HepG2 (cell line): ENCODE measurements at regions of chr19 and their contacts with region 1.

Region 1: DNA sequence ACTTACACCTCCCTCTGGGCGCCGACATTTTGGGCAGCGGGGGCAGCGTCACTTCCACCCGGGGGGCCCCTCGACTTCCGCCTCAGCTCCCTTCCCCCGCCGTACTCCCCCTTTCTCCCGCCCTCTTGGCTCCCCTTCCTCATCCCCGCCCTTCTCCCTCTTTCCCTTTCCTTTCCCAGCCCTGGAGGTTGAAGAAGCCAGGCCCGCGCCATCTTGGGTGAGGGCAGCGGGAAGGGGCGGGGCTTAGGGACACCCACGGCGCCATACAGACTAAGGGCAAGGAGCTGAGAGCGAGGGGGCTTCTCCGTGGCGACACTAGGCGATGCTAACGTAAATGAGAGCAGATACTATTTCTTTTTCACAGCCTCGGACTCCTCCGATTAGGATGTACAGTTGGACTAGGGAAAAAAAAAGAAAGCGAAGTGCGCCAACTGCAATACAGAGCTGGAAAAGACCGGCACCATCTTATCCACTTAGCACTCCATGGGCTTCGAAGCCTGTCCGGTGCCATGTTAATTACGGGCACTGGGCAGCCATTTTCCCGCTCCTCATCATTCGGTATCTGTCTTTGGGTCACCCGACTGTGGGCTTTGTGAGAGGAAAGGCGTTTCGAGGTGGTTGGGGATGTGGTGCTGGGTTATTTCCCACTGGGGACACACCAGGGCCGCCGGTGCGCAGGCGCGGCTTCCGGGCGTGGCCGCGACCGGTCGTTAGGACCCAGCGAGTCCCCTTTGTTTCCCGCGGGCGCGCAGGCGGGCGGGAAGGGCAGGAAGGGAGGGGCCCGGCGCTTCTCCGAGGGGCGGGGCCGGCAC is at the start of gene FIZ1:
- DNase-seq: peak; percentile 98
- ATAC-seq: peak; percentile 86
- H3K4me3 ChIP-seq: peak within 1 kb of the TSS; percentile 73 to 94 (median 90)
- H3K27ac ChIP-seq: peak within 1 kb of the TSS; percentile 98
- H3K4me1 ChIP-seq: peaks cover 39% of the 10 kb centered on the region
- H3K27me3 ChIP-seq: no peaks in the 10 kb centered on the region; a peak in 1 of 5 replicates
- CTCF ChIP-seq: no peak
- EP300 ChIP-seq: no peak
- POLR2A ChIP-seq: peak; percentile 10 to 50; a peak in 2 of 4 replicates
- RAD21 ChIP-seq: peak; percentile 30; the same call in 1 of the 2 replicates
- total RNA-seq, gene FIZ1: 3.4 and 5.9 TPM in 2 replicates

Region 2: GRCh38 chr19:55476100-55476775 is 123.4 kb before region 1 on chr19 and contains the start of gene ZNF628:
- CTCF ChIA-PET with region 1: no interaction called
- POLR2A ChIA-PET with region 1: interaction called, 12 read pairs
- in situ Hi-C with region 1: no loop called
- intact Hi-C with region 1: no loop called
- DNase-seq: peak; percentile 93
- ATAC-seq: peak; percentile 93
- H3K4me3 ChIP-seq: peak within 1 kb of the TSS; percentile 81 to 97 (median 86)
- H3K27ac ChIP-seq: peak within 1 kb of the TSS; percentile 77
- H3K4me1 ChIP-seq: peaks cover 53% of the 10 kb centered on the region
- H3K27me3 ChIP-seq: no peaks in the 10 kb centered on the region; a peak in 1 of 5 replicates
- CTCF ChIP-seq: no peak
- EP300 ChIP-seq: no peak
- POLR2A ChIP-seq: peak in 1 of 2 experiments; percentile 37; a peak in 1 of 4 replicates
- RAD21 ChIP-seq: no peak; the same call in 1 of the 2 replicates
- total RNA-seq, gene ZNF628: 1.00 and 1.2 TPM in 2 replicates

Region 3: DNA sequence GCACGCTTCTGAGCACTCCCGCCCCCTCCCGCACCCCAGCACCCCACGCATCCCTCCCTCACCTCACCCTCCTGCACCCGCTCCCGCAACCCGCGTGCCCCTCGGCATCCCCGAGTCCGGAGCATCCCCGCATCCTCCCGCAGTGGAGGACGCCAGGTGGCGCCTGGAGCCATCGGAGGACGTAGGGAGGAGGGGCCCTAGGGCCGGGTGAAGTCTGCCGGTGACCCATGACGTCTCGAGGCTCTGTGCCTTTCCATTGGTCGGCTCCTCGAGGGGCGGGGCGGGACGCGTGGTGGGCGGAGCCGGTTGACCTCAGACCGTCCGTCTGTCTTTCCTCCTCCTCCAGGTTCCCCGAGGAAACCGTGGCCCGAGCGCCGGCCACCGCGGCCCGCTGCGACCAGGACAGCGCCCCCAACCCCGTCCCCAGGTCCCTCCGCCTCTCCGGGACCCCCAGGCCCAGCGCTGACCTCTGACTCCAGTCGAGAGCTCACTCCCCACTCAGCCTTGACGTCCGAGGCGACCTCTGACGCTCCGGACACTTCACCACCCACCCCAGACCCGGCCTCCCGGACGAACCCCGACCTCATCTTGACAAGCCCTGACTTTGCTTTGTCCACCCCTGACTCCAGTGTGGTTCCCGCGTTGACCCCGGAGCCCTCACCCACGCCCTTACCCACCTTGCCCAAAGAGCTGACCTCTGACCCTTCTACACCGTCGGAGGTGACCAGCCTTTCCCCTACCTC is 82.6 kb before region 1 on chr19:
- CTCF ChIA-PET with region 1: no interaction called
- POLR2A ChIA-PET with region 1: interaction called, 10 read pairs
- in situ Hi-C with region 1: no loop called
- intact Hi-C with region 1: no loop called
- DNase-seq: peak; percentile 78
- ATAC-seq: peak; percentile 97
- H3K4me3 ChIP-seq: peak overlapping the region; percentile 47 to 79 (median 68)
- H3K27ac ChIP-seq: no peak overlapping the region
- H3K4me1 ChIP-seq: peaks cover 4% of the 10 kb centered on the region; the same call in 1 of the 2 replicates
- H3K27me3 ChIP-seq: peaks cover 0 to 22% of the 10 kb centered on the region in 2 experiments; a peak in 4 of 5 replicates
- CTCF ChIP-seq: peak; percentile 100
- EP300 ChIP-seq: no peak
- POLR2A ChIP-seq: peak in 1 of 2 experiments; percentile 46; a peak in 1 of 4 replicates
- RAD21 ChIP-seq: peak; percentile 98

Region 4: DNA sequence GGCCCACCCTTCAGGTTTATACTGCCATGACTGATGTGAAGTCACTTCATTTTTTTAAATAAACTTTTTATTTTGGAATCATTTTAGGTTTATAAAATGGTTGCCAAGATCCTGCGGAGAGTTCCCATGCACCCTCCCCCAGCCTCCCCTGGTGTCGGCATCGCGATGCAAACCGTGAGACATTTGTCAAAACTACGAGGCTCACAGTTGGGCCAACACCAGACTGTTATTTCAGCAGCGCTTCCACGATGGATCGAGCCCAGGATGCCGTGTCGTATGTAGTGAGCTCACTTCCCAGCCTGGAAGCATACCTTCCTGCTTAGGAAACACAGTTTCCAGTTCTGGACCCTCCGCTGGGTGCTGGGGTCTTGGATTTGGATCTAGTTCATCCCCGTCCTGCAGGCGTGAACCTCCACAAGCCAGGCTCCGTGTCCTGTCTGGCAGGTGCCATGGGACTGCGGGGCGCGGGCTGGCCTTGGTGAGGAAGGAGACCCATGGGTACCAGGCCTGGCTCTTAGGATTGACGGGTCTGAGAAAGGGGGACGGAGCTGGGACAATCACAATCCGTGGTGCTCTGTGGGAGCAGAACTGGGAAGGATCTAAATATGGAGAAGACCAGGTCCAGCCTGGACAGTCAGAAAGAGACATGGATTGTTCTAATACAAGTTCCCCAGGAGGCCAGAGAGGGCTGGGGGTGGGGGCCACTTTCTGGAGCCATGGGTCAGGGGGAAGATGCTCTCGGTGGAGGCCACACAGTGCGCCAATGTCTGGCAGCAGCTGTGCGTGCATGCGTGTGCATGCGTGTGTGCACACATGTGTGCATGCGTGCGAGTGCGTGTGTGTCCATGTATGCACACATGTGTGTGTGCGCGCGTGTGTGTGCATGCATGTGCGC is 60.3 kb before region 1 on chr19:
- CTCF ChIA-PET with region 1: no interaction called
- POLR2A ChIA-PET with region 1: no interaction called
- in situ Hi-C with region 1: no loop called
- intact Hi-C with region 1: no loop called
- DNase-seq: no peak
- ATAC-seq: no peak
- H3K4me3 ChIP-seq: no peak overlapping the region
- H3K27ac ChIP-seq: no peak overlapping the region
- H3K4me1 ChIP-seq: peaks cover 35% of the 10 kb centered on the region
- H3K27me3 ChIP-seq: no peaks in the 10 kb centered on the region; a peak in 1 of 5 replicates
- CTCF ChIP-seq: no peak
- EP300 ChIP-seq: no peak
- POLR2A ChIP-seq: no peak
- RAD21 ChIP-seq: no peak

Region 5: DNA sequence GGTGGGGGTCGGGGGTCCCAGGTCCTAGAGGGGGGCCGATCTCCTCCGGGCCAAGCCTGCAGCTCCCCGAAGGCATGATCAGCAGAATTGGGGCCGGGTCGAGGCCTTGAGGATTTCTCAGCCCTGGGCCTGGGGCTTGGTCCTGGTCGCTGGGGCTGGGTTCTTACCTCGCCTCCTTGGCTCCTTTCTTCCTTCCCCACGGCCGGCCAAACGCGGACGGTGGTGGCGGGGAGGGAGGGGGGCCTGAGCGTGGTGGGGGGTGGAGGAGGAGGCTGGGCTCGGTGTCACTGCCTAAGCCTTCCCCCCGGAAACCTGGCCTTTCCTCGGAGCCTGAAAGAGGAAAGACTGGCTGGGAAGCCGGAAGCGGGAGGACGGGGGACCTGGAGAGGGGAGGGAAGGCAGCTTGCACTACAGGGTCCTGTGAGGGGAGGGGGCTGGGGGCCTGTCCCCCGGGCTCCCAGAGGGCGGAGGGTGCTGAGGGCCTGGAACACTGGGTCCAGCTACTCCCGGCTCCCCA is 19.0 kb before region 1 on chr19 and contains the start of gene ZNF579:
- CTCF ChIA-PET with region 1: no interaction called
- POLR2A ChIA-PET with region 1: interaction called, 66 read pairs
- in situ Hi-C with region 1: no loop called
- intact Hi-C with region 1: loop called (anchors 2 kb)
- DNase-seq: peak; percentile 80
- ATAC-seq: peak; percentile 64
- H3K4me3 ChIP-seq: peak within 1 kb of the TSS; percentile 88 to 97 (median 95)
- H3K27ac ChIP-seq: peak within 1 kb of the TSS; percentile 79
- H3K4me1 ChIP-seq: peaks cover 43% of the 10 kb centered on the region
- H3K27me3 ChIP-seq: no peaks in the 10 kb centered on the region
- CTCF ChIP-seq: no peak; the same call in 1 of the 2 replicates
- EP300 ChIP-seq: peak in 1 of 2 experiments; percentile 29; a peak in 1 of 4 replicates
- POLR2A ChIP-seq: peak in 1 of 2 experiments; percentile 23; a peak in 2 of 4 replicates
- RAD21 ChIP-seq: no peak
- total RNA-seq, gene ZNF579: 1.7 and 2.9 TPM in 2 replicates

Region 6: DNA sequence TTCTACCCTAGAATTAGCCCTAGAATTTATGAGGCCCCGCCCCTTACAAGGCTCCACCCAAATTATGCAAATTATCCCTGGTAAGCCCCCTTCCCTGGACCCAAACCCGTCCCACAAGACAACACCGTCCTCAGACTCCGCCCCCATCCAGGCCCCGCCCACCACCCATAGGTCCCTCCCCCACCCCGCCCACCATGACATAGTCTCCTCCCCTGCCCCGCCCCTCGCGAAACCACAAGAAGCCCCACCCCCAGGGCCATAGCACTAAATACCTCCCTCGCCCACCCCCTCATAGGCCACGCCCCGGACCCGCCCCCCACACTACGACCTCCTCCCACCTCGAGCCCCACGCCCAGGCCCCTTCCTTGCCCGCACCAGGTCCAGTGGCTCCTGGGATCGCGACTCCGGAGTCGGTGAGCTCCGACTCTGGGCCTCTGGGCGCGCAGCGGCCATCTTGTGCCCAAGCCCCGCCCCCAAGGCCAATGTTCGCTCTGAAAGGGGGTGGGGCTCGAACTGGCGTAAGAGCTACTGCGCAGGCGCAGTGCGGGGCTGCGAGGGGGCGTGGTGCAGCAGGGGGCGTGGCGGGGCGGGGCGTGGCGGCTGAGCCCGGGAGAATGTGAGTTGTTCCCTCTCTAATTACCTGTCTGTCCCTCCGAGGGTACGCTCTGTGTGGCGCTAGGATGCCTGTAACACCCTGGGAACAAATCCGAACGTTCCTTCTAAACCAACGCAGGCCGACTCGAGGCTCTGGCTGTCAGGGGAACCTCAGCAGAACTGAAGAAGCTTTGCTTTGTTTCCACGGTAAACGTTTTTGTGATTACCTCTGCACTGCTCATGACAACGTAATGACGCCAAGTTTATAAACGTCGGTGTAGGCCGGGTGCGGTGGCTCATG is 24.7 kb after region 1 on chr19 and contains the start of gene ZNF784:
- CTCF ChIA-PET with region 1: no interaction called
- POLR2A ChIA-PET with region 1: interaction called, 23 read pairs
- in situ Hi-C with region 1: no loop called
- intact Hi-C with region 1: no loop called
- DNase-seq: peak; percentile 82
- ATAC-seq: peak; percentile 70
- H3K4me3 ChIP-seq: peak within 1 kb of the TSS; percentile 65 to 82 (median 70)
- H3K27ac ChIP-seq: peak within 1 kb of the TSS; percentile 98
- H3K4me1 ChIP-seq: peaks cover 27% of the 10 kb centered on the region
- H3K27me3 ChIP-seq: no peaks in the 10 kb centered on the region
- CTCF ChIP-seq: peak; percentile 22; the same call in 1 of the 2 replicates
- EP300 ChIP-seq: no peak
- POLR2A ChIP-seq: peak; percentile 74 to 88
- RAD21 ChIP-seq: no peak
- total RNA-seq, gene ZNF784: 4.0 and 4.2 TPM in 2 replicates

Region 7: GRCh38 chr19:55653758-55654539 is 54.3 kb after region 1 on chr19:
- CTCF ChIA-PET with region 1: no interaction called
- POLR2A ChIA-PET with region 1: interaction called, 23 read pairs
- in situ Hi-C with region 1: no loop called
- intact Hi-C with region 1: no loop called
- DNase-seq: peak; percentile 99
- ATAC-seq: peak; percentile 85
- H3K4me3 ChIP-seq: peak overlapping the region; percentile 85 to 99 (median 97)
- H3K27ac ChIP-seq: peak overlapping the region; percentile 99
- H3K4me1 ChIP-seq: peaks cover 30% of the 10 kb centered on the region
- H3K27me3 ChIP-seq: no peaks in the 10 kb centered on the region; a peak in 1 of 5 replicates
- CTCF ChIP-seq: peak; percentile 99
- EP300 ChIP-seq: 0 out of 4 replicates have a peak, but pooled peaks of 1 of the 2 experiments have one; percentile 35
- POLR2A ChIP-seq: peak; percentile 54 to 80; a peak in 3 of 4 replicates
- RAD21 ChIP-seq: peak; percentile 79

Region 8: GRCh38 chr19:55766466-55766865 is 166.8 kb after region 1 on chr19:
- CTCF ChIA-PET with region 1: no interaction called
- POLR2A ChIA-PET with region 1: no interaction called
- in situ Hi-C with region 1: no loop called
- intact Hi-C with region 1: no loop called
- DNase-seq: no peak
- ATAC-seq: no peak
- H3K4me3 ChIP-seq: no peak overlapping the region
- H3K27ac ChIP-seq: no peak overlapping the region
- H3K4me1 ChIP-seq: no peaks in the 10 kb centered on the region
- H3K27me3 ChIP-seq: peaks cover 0 to 16% of the 10 kb centered on the region in 2 experiments; a peak in 1 of 5 replicates
- CTCF ChIP-seq: no peak
- EP300 ChIP-seq: no peak
- POLR2A ChIP-seq: no peak
- RAD21 ChIP-seq: no peak